ENCODE measurements at regions of chr2 and their contacts with region 1.

Region 1: GRCh38 chr2:230075988-230076631 is 7.4 kb upstream of the SLC16A14 start:
- DNase-seq: no peak
- H3K4me3 ChIP-seq: no peak overlapping the region
- H3K27ac ChIP-seq: no peak overlapping the region
- H3K4me1 ChIP-seq: no peaks in the 10 kb centered on the region
- H3K27me3 ChIP-seq: no peaks in the 10 kb centered on the region
- CTCF ChIP-seq: no peak

Region 2: DNA sequence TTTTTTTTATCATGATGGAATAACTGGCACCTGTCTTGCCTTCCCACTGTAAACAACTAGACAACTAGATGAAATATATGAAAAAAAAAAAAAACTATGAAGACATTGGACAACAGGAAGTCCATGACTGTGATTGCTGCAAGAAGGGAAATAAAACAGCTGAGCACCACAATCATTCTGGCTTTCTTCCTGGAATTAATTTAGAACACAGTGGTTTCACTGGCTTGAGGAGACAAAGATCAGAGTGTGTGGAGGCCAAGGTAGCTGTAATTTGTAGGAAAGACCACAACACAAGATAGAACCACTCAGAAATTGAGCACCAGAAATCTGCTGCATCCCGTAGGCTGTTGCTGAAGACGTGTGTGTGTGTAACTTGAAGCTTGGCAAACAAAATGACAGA is 683.9 kb before region 1 on chr2:
- intact Hi-C with region 1: no loop called
- DNase-seq: no peak
- H3K4me3 ChIP-seq: no peak overlapping the region
- H3K27ac ChIP-seq: peak overlapping the region; percentile 71
- H3K4me1 ChIP-seq: no peaks in the 10 kb centered on the region
- H3K27me3 ChIP-seq: no peaks in the 10 kb centered on the region
- CTCF ChIP-seq: no peak

Region 3: DNA sequence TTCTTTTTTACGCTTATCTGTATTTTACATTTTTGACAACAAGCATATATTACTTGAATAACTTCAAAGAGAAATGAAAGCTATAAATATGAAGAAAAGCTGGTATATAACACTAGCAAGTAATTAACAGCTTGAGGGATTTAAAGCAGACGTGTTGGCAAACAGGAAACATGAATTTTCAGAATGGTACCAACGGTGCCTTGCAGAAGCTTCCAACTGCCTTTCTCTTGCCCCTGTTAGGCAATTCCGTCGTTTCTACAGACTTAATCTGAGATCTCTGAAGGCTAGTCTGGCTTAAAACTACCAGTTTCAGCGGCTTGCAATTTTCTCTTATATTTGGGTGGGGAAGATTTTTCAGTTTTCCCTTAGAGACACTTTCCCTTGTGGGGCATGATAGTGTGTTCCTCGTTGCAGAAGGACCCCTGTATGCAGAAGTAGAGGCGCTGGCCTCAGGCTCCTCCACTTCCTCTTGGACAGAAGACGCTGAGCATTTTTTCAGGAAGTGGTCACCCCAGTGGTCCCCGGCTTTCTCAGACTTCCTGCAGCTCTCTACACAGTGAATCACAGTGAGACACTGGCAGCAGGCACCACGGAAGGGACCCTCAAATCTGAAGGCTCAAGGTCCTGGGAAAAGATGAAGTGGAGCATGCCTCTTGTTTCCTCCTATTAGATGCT is 48.8 kb after region 1 on chr2:
- intact Hi-C with region 1: loop called (anchors 10 kb)
- DNase-seq: peak; percentile 22
- H3K4me3 ChIP-seq: no peak overlapping the region
- H3K27ac ChIP-seq: no peak overlapping the region
- H3K4me1 ChIP-seq: peaks cover 29% of the 10 kb centered on the region
- H3K27me3 ChIP-seq: no peaks in the 10 kb centered on the region
- CTCF ChIP-seq: no peak

Region 4: GRCh38 chr2:230144355-230144754 is 68.2 kb after region 1 on chr2:
- intact Hi-C with region 1: no loop called
- DNase-seq: no peak
- H3K4me3 ChIP-seq: no peak overlapping the region
- H3K27ac ChIP-seq: no peak overlapping the region
- H3K4me1 ChIP-seq: no peaks in the 10 kb centered on the region
- H3K27me3 ChIP-seq: no peaks in the 10 kb centered on the region
- CTCF ChIP-seq: no peak